HCT116 (cell line): ENCODE measurements at regions of chr1 and their contacts with region 1.

Region 1: GRCh38 chr1:245045087-245045881 is 109.5 kb upstream of the KIF26B start:
- DNase-seq: no peak
- ATAC-seq: peak; percentile 54
- H3K4me3 ChIP-seq: no peak overlapping the region
- H3K27ac ChIP-seq: no peak overlapping the region
- H3K4me1 ChIP-seq: no peaks in the 10 kb centered on the region; a peak in 1 of 4 replicates
- H3K27me3 ChIP-seq: no peaks in the 10 kb centered on the region
- CTCF ChIP-seq: no peak
- POLR2A ChIP-seq: no peak
- RAD21 ChIP-seq: no peak

Region 2: DNA sequence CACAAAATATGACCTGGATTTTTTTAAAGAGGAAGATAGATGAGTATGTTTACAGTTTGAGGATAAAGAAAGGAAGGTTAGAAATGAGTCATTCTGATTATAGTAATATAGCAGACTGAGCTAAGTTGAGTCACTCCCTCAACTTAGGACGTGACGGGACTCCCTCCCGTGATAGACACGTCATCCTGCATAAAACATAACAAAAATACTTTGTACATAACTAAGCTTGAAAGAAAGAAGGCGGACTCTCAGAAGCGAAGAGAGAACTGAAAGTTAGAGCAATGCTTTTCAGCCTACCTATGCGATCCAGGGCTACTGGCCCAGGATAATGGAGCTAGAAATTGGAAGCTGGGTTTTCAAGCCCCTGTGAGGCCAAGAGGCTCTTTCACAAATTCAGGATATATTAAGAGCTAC is 445.3 kb before region 1 on chr1:
- CTCF ChIA-PET with region 1: interaction called, 27 read pairs
- POLR2A ChIA-PET with region 1: no interaction called
- RAD21 ChIA-PET with region 1: no interaction called
- intact Hi-C with region 1: loop called (anchors 2 kb)
- DNase-seq: peak; percentile 74
- ATAC-seq: peak; percentile 88
- H3K4me3 ChIP-seq: peak overlapping the region; percentile 22 to 42
- H3K27ac ChIP-seq: peak overlapping the region; percentile 42; the same call in 1 of the 2 replicates
- H3K4me1 ChIP-seq: peaks cover 7 to 22% of the 10 kb centered on the region in 2 experiments; a peak in 2 of 4 replicates
- H3K27me3 ChIP-seq: no peaks in the 10 kb centered on the region
- CTCF ChIP-seq: no peak
- POLR2A ChIP-seq: no peak
- RAD21 ChIP-seq: no peak

Region 3: GRCh38 chr1:244605835-244606370 is 439.4 kb before region 1 on chr1:
- CTCF ChIA-PET with region 1: interaction called, 27 read pairs
- POLR2A ChIA-PET with region 1: no interaction called
- RAD21 ChIA-PET with region 1: no interaction called
- intact Hi-C with region 1: loop called (anchors 2 kb)
- DNase-seq: no peak
- ATAC-seq: no peak
- H3K4me3 ChIP-seq: no peak overlapping the region
- H3K27ac ChIP-seq: no peak overlapping the region
- H3K4me1 ChIP-seq: 0 out of 4 replicates have a peak, but pooled peaks cover 0 to 6% of the 10 kb centered on the region in 2 experiments
- H3K27me3 ChIP-seq: no peaks in the 10 kb centered on the region
- CTCF ChIP-seq: no peak
- POLR2A ChIP-seq: no peak
- RAD21 ChIP-seq: no peak

Region 4: DNA sequence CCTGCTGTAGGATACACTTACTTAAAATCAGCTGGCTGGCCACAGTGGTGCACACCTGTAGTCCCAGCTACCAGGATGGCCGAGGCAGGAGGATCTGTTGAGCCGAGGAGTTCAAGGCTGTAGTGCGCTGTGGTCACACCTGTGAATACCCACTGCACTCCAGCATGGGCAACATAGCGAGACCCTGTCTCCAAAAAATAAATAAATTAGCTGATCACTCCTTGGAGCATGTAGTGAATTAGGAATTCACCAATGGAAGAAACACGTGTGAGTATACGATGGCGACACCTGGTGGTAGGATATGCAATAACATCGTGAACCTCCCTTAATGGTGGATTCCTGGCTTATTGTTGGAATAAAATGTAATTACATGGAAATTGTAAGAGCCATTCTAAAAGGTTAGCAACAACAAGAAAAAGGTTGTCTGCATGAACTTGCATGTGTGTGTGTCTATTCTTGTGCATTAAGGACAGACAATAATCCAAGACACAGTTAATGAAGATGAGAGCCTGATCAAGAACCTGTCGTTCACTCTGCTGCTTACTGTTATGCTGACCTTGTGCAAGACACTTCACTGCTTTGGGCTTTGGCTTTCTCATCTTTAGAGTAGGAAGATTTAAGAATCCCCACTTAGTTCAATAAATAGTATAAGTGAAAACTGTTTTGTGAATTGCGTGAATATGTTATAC is 248.4 kb before region 1 on chr1:
- CTCF ChIA-PET with region 1: interaction called, 26 read pairs
- POLR2A ChIA-PET with region 1: no interaction called
- RAD21 ChIA-PET with region 1: interaction called, 6 to 11 read pairs
- intact Hi-C with region 1: loop called (anchors 1 kb)
- DNase-seq: peak; percentile 35
- ATAC-seq: peak; percentile 68
- H3K4me3 ChIP-seq: no peak overlapping the region
- H3K27ac ChIP-seq: no peak overlapping the region
- H3K4me1 ChIP-seq: peaks cover 7 to 15% of the 10 kb centered on the region in 2 experiments; a peak in 3 of 4 replicates
- H3K27me3 ChIP-seq: no peaks in the 10 kb centered on the region
- CTCF ChIP-seq: peak; percentile 70 to 90 (median 85)
- POLR2A ChIP-seq: no peak
- RAD21 ChIP-seq: peak; percentile 94

Region 5: GRCh38 chr1:244849189-244849866 is 196.0 kb before region 1 on chr1:
- CTCF ChIA-PET with region 1: interaction called, 12 read pairs
- POLR2A ChIA-PET with region 1: no interaction called
- RAD21 ChIA-PET with region 1: no interaction called
- intact Hi-C with region 1: no loop called
- DNase-seq: no peak
- ATAC-seq: no peak
- H3K4me3 ChIP-seq: no peak overlapping the region
- H3K27ac ChIP-seq: no peak overlapping the region
- H3K4me1 ChIP-seq: no peaks in the 10 kb centered on the region
- H3K27me3 ChIP-seq: no peaks in the 10 kb centered on the region
- CTCF ChIP-seq: no peak
- POLR2A ChIP-seq: no peak
- RAD21 ChIP-seq: no peak

Region 6: DNA sequence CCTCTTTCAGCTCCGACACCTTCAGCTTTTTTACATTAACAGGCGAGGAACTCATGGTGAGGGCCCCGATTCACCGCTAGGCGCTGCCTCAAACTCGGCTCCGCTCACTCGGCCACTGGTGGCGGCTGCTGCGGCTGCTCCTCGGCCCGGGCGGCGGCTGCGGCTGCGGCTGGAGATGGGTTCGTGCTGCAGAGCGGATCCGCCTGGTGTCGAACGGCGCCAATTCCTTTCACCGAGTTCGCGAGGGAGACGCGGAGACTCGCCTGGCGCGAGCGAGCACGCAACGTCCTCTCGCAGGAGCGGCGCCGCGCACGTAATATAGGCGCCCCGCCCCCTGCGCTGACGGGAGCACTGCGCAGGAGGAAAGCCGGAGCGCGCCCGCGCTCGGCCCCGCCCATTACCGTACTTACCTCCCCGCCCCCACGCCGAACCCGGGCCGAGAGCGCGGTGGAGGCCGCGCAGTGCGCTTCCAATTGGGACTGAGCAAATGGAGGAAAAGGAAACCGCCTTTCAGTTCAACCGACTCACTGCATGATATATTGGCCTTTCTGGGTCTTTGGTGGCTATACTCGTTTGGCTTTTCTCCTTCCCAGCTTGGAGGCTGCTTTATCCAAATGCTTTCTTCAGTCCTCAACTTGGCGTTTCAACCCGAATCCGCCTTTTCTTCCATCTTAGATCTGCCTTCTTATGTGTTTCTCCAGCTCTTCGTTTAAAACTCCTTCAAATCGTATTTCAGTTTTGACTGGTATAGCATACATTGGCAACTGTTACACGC is 180.8 kb before region 1 on chr1 and contains the start of gene HNRNPU:
- CTCF ChIA-PET with region 1: interaction called, 14 read pairs
- POLR2A ChIA-PET with region 1: interaction called, 4 read pairs
- RAD21 ChIA-PET with region 1: interaction called in 1 of 2 experiments, 4 read pairs
- intact Hi-C with region 1: loop called (anchors 5 kb)
- DNase-seq: peak; percentile 88
- ATAC-seq: peak; percentile 81
- H3K4me3 ChIP-seq: peak within 1 kb of the TSS; percentile 93 to 98
- H3K27ac ChIP-seq: peak within 1 kb of the TSS; percentile 94
- H3K4me1 ChIP-seq: peaks cover 18 to 25% of the 10 kb centered on the region in 2 experiments
- H3K27me3 ChIP-seq: no peaks in the 10 kb centered on the region
- CTCF ChIP-seq: peak in 2 of 3 experiments; percentile 33 to 39; a peak in 4 of 6 replicates
- POLR2A ChIP-seq: peak; percentile 71
- RAD21 ChIP-seq: peak; percentile 2; the same call in 1 of the 2 replicates
- total RNA-seq, gene HNRNPU: 424 TPM

Region 7: GRCh38 chr1:244970661-244971551 is 74.4 kb before region 1 on chr1:
- CTCF ChIA-PET with region 1: interaction called, 5 read pairs
- POLR2A ChIA-PET with region 1: no interaction called
- RAD21 ChIA-PET with region 1: no interaction called
- intact Hi-C with region 1: loop called (anchors 1 kb)
- DNase-seq: peak; percentile 93
- ATAC-seq: peak; percentile 80
- H3K4me3 ChIP-seq: peak overlapping the region; percentile 60 to 67
- H3K27ac ChIP-seq: peak overlapping the region; percentile 98
- H3K4me1 ChIP-seq: peaks cover 12 to 29% of the 10 kb centered on the region in 2 experiments; a peak in 3 of 4 replicates
- H3K27me3 ChIP-seq: no peaks in the 10 kb centered on the region
- CTCF ChIP-seq: peak; percentile 25 to 57 (median 52); a peak in 4 of 6 replicates
- POLR2A ChIP-seq: no peak
- RAD21 ChIP-seq: no peak; the same call in 1 of the 2 replicates